HEK293 (cell line): ENCODE measurements at regions of chr17 and their contacts with region 1.

Region 1: DNA sequence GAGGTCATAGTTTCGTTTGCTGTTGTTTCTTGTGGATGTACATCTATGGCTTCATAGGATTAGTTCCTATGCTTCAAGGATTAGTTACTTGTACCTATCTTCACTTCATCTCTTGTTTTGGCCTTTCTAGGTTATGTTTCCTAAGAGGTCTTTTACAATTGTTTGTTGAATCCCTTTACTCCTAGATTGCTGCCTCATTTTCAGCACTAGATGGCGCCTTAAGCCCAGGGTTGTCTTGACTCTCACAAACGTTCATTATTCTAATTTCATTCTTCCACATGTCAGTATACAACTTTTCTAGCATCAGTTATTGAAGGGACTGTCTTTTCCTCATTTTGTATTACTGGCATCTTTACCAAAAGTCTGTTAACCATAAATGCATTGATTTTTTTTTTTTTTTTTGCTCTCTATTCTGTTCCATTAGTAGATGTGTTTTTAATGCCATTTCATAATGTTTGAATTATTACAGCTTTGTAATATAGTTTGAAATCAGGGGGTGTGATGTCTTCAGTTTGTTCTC is 45.0 kb upstream of the NACA2 start:
- H3K4me3 ChIP-seq: no peak overlapping the region
- H3K27ac ChIP-seq: no peak overlapping the region
- H3K4me1 ChIP-seq: no peaks in the 10 kb centered on the region
- CTCF ChIP-seq: peak; percentile 34; the same call in 1 of the 2 replicates

Region 2: DNA sequence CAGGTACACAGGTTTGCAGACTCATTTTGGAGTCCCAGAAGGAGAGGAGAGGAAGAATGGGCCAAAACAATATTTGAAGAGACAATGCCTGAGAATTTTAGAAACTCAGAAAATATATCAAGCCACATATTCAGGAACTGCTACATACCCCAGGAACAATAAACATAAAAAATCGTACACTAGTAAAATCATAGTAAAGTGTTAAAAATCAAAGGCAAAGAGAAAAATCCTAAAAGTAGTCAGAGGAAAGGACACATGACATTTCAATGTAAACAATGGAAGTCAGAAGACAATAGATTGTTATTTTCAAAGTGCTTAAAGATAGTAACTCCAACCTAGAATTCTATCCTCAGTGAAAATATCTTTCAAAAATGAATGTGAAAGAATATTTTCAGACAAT is 16.5 kb before region 1 on chr17:
- CTCF ChIA-PET with region 1: interaction called, 20 read pairs
- POLR2A ChIA-PET with region 1: no interaction called
- H3K4me3 ChIP-seq: no peak overlapping the region
- H3K27ac ChIP-seq: no peak overlapping the region
- H3K4me1 ChIP-seq: no peaks in the 10 kb centered on the region
- CTCF ChIP-seq: no peak

Region 3: GRCh38 chr17:61624951-61625350 is 11.0 kb before region 1 on chr17:
- CTCF ChIA-PET with region 1: interaction called, 20 read pairs
- POLR2A ChIA-PET with region 1: no interaction called
- H3K4me3 ChIP-seq: no peak overlapping the region
- H3K27ac ChIP-seq: no peak overlapping the region
- H3K4me1 ChIP-seq: no peaks in the 10 kb centered on the region
- CTCF ChIP-seq: no peak

Region 4: DNA sequence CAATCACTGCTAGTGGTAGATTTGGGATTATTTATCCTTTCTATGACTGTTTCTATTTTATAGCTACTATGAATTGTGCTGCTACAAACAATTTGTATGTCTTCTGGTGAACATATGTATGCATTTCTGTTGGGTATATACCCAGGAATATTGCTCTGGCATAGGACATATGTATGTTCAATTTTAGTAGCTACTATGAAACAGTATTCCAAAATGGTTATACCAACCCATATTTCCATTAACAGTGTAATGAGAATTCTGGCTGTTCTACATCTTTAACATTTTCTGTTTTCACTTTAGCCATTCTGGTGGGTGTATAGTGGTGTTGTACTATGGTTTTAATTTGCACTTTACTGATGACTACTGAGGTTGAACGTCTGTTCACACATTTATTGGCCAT is 12.6 kb after region 1 on chr17:
- CTCF ChIA-PET with region 1: interaction called, 12 read pairs
- POLR2A ChIA-PET with region 1: no interaction called
- H3K4me3 ChIP-seq: no peak overlapping the region
- H3K27ac ChIP-seq: no peak overlapping the region
- H3K4me1 ChIP-seq: no peaks in the 10 kb centered on the region
- CTCF ChIP-seq: no peak

Region 5: GRCh38 chr17:61837175-61838051 is 201.4 kb after region 1 on chr17:
- CTCF ChIA-PET with region 1: interaction called, 31 read pairs
- POLR2A ChIA-PET with region 1: no interaction called
- H3K4me3 ChIP-seq: no peak overlapping the region
- H3K27ac ChIP-seq: no peak overlapping the region
- H3K4me1 ChIP-seq: no peaks in the 10 kb centered on the region
- CTCF ChIP-seq: peak; percentile 27; the same call in 1 of the 2 replicates